Sigmoid colon (tissue), 7 donors: ENCODE measurements at regions of chr5 and their contacts with region 1.

Region 1: DNA sequence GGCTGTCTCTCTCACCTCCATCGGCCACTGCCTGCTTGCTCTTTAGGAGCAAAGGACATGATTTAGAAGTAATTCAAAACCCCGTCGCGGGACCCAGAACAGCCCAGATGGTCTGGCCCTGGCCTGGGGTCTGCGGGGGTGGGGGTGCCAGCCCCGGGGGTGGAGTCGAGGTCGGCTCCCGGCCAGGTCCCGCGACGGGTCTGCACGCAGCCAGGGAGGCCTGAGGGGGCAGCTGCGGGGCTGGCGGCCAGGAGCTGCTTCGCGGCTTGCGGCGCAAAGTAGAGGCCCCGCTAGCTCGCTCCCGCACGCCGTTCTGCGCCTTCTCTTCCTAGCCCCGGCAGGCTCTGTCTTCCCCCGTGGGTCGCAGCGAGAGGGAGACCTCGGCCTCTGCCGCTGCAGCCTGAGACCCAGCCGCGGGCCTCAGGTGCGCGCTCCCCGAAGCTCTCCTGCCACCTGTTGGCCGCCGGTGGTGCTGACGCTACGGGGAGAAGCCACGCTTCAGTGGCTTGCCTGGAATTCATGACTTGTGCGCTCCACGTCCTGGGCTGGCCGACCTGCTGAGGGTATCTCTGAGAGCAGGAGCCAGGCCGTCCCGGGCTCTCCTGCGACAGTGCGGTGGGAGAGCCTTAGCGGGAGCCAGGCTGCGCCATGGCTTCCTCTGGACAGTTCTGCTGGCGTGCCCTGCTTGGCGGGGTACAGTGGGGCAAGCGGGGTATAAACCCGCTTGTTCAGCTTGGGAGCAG is 157.2 kb upstream of the PITX1 start:
- DNase-seq: peak; percentile 85
- H3K4me3 ChIP-seq: peak overlapping the region; percentile 10 to 54 (median 46)
- H3K27ac ChIP-seq: peak overlapping the region in 2 of 4 donors; percentile 23 to 29
- H3K4me1 ChIP-seq: peaks cover 0 to 10% (median 9%) of the 10 kb centered on the region in 4 donors
- H3K27me3 ChIP-seq: no peaks in the 10 kb centered on the region
- CTCF ChIP-seq: peak in 3 of 4 experiments; percentile 80 to 93 (median 89)
- EP300 ChIP-seq: no peak
- POLR2A ChIP-seq: no peak

Region 2: DNA sequence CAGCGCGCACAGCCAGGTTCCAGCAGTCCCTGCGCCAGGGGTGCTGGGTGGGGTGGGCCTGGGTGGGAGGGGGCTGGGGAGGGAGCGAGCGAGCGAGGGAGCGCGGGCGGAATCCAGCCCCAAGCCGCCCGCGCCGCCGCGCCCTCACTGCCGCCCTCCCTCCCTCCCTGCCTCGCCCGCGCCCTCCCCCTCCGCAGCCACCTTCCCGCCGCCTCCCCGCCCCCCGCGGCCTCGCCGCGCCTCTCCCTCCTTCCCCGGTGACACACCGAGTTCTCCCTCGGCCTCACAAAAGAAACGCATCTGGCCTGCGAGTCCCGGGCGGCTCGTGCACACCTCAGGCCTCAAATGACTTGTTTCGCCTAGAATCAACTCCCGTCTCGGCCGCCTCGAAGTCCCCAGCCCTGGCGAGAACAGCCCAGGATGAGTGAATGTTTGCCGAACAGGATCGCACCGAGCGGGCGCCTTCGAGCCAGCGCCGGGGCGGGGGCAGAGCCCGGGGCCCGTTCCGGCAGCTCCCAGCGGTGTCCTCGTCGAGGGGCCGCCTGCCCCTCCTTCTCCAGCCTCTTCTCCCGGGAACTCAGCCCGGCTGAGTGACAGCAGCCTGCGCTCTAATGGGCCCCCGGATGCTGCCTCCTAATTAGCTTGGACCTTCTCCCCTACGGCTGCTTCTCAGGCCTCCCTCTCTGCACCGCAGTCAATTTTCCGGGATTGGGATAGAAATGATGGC is 156.9 kb before region 1 on chr5:
- intact Hi-C with region 1: loop called (anchors 5 kb)
- DNase-seq: no peak
- H3K4me3 ChIP-seq: peak overlapping the region; percentile 11 to 56 (median 45)
- H3K27ac ChIP-seq: peak overlapping the region; percentile 6 to 71 (median 44)
- H3K4me1 ChIP-seq: peaks cover 0 to 54% (median 51%) of the 10 kb centered on the region in 4 donors
- H3K27me3 ChIP-seq: peaks cover 85 to 100% (median 98%) of the 10 kb centered on the region in 3 donors
- CTCF ChIP-seq: no peak
- EP300 ChIP-seq: no peak
- POLR2A ChIP-seq: no peak

Region 3: GRCh38 chr5:135129307-135129706 is 61.9 kb before region 1 on chr5:
- intact Hi-C with region 1: no loop called
- DNase-seq: no peak
- H3K4me3 ChIP-seq: no peak overlapping the region
- H3K27ac ChIP-seq: no peak overlapping the region
- H3K4me1 ChIP-seq: peaks cover 0 to 11% (median 5%) of the 10 kb centered on the region in 4 donors
- H3K27me3 ChIP-seq: no peaks in the 10 kb centered on the region
- CTCF ChIP-seq: no peak
- EP300 ChIP-seq: no peak
- POLR2A ChIP-seq: no peak

Region 4: DNA sequence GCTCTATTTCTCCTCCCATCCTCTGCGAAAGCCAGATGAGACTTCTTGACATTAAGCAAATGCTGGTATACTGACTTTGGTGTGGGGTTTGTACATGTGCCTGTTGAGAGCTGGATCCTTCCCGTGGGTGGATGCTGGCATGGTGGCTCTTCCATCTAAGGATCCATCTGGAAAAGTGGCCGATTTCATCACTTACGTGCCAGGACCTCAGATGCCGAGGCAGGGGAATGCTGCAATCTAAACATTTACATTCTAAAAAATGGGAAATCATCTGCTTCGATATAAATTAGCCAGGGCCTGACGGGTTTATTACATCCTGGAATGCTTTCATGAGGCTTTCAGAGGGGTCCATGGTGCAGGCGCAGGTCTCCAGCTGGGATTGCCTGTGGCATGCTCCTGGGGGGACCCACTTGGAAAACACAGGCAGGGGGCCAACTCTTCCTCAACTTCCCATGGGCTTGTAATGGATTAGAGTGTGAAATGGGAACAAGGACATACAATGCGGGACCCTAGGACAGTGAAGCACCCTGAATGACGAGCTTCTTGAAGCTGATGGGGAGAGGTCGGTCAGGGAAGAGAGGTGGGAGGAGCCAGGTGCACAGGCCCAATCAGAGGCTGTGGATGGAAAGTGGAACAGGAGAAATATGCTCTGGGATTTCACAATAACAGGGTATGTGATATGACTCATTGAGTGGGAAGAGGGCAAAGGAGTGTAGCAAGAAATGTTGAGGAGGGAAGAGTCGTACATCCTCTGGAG is 51.7 kb before region 1 on chr5:
- intact Hi-C with region 1: loop called (anchors 5 kb)
- DNase-seq: peak; percentile 73
- H3K4me3 ChIP-seq: no peak overlapping the region
- H3K27ac ChIP-seq: peak overlapping the region; percentile 38 to 75 (median 58)
- H3K4me1 ChIP-seq: peaks cover 0 to 43% (median 39%) of the 10 kb centered on the region in 4 donors
- H3K27me3 ChIP-seq: no peaks in the 10 kb centered on the region
- CTCF ChIP-seq: no peak
- EP300 ChIP-seq: peak in 1 of 4 donors; percentile 26
- POLR2A ChIP-seq: no peak

Region 5: DNA sequence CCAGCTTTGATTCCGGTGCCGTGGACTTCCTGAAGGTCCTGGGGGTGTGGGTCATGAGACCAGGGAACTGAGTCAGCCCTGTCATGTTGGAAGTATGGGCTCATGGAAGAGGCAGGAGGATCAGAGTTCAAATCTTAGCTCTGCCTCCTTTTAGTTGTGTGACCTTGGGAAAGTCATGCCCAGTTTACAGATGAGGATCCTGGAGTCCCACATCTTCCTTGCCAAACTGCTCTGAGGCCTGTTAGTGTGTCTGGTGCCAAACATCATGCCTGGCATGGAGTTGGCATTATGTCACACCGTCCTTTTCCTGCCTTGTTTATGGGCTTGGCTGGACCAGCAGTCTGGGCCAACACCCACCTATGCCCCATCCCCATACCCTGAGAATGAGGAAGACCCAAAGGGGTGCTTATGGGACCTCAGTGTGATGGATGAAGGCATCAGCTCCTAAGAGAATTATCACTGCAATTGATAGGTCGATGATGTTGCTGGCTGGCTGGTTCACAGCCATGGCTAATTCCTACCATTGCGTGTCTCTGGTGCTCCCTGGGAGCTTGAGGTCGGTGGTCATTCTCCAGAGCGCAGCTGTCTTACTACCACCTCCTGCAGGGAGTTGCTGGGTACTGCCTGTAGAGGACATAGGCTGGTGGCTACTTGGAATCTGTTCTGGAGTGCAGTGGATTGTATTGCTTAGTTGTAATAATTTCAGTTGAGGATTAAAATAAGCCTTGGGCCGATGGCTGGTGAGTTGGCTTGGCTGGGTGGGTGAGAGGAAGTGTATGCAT is 16.7 kb before region 1 on chr5:
- intact Hi-C with region 1: no loop called
- DNase-seq: no peak
- H3K4me3 ChIP-seq: no peak overlapping the region
- H3K27ac ChIP-seq: no peak overlapping the region
- H3K4me1 ChIP-seq: no peaks in the 10 kb centered on the region
- H3K27me3 ChIP-seq: no peaks in the 10 kb centered on the region
- CTCF ChIP-seq: no peak
- EP300 ChIP-seq: no peak
- POLR2A ChIP-seq: no peak

Region 6: GRCh38 chr5:135255461-135256178 is 64.4 kb after region 1 on chr5:
- intact Hi-C with region 1: no loop called
- DNase-seq: no peak
- H3K4me3 ChIP-seq: no peak overlapping the region
- H3K27ac ChIP-seq: no peak overlapping the region
- H3K4me1 ChIP-seq: no peaks in the 10 kb centered on the region
- H3K27me3 ChIP-seq: no peaks in the 10 kb centered on the region
- CTCF ChIP-seq: no peak
- EP300 ChIP-seq: no peak
- POLR2A ChIP-seq: no peak